Mammary epithelial cell (primary cell): ENCODE measurements at regions of chr7 and their contacts with region 1.

Region 1: DNA sequence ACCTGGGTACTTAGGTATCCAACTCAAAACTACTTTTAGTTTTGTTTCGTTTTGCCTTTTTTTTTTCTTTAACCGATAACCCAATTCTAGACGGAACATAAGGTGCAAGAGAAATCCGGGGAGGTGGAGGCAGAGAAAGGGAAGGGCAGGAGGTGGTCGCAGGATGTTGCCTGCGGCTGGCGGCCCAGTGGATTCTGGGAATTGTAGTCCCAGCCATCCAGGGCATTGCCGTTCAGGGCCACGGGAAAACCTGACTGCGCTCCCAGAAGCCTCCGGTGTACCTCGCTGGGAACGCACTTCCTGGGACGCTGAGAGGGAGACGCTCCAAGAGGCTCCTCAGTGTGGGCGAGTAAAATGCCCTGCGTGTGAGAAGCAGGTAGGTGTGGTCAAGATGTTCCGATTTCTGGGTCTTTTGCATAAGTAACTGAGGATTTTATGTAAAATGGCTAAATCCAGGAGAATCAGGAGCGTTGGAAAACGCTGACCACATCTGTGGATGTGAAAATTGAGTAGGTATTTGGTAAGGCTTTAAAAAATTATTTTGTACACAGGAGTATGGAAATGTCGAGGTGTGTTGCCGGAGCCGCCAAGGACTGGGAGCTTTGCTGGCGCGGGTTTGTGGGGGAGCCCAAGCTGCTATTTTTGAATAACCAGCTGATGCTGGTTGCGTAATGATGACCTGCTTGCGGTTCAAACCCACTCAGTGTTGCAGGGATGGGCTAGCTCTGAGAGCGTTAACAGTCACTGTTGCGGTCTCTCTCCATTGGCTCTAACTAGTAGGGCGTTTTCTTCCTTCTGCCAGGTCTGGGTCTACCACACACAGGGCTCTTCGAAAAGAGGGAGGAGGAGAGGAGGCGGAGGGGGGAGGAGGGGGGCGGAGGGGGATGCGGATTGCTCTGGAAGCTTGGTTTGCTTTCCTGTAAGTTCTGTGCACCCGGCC is at the start of gene CLDN12:
- DNase-seq: peak; percentile 95
- H3K4me3 ChIP-seq: peak within 1 kb of the TSS; percentile 76 to 88 (median 83)
- H3K27ac ChIP-seq: peak within 1 kb of the TSS; percentile 97
- H3K4me1 ChIP-seq: peaks cover 10% of the 10 kb centered on the region
- H3K27me3 ChIP-seq: no peaks in the 10 kb centered on the region
- CTCF ChIP-seq: no peak
- total RNA-seq, gene CLDN12: 45.3 to 68.5 TPM

Region 2: GRCh38 chr7:90173127-90173844 is 230.2 kb before region 1 on chr7:
- CTCF ChIA-PET with region 1: no interaction called
- dilution Hi-C with region 1: no loop called
- in situ Hi-C with region 1: loop called in 1 of 2 experiments (anchors 25 kb)
- intact Hi-C with region 1: no loop called
- DNase-seq: no peak
- H3K4me3 ChIP-seq: no peak overlapping the region
- H3K27ac ChIP-seq: no peak overlapping the region
- H3K4me1 ChIP-seq: peaks cover 10% of the 10 kb centered on the region
- H3K27me3 ChIP-seq: no peaks in the 10 kb centered on the region
- CTCF ChIP-seq: no peak

Region 3: GRCh38 chr7:90346336-90347125 is 56.9 kb before region 1 on chr7 and contains the start of gene GTPBP10:
- CTCF ChIA-PET with region 1: no interaction called
- dilution Hi-C with region 1: no loop called
- in situ Hi-C with region 1: no loop called
- intact Hi-C with region 1: loop called (anchors 1 kb)
- DNase-seq: peak; percentile 90
- H3K4me3 ChIP-seq: peak within 1 kb of the TSS; percentile 76 to 89 (median 84)
- H3K27ac ChIP-seq: peak within 1 kb of the TSS; percentile 84
- H3K4me1 ChIP-seq: peaks cover 12% of the 10 kb centered on the region
- H3K27me3 ChIP-seq: no peaks in the 10 kb centered on the region
- CTCF ChIP-seq: peak; percentile 55 to 83
- total RNA-seq, gene GTPBP10: 12.2 to 35.5 TPM

Region 4: GRCh38 chr7:90383422-90383821 is 20.0 kb before region 1 on chr7:
- CTCF ChIA-PET with region 1: no interaction called
- dilution Hi-C with region 1: no loop called
- in situ Hi-C with region 1: no loop called
- intact Hi-C with region 1: loop called (anchors 1 kb)
- DNase-seq: peak; percentile 54
- H3K4me3 ChIP-seq: peak overlapping the region in 1 of 3 experiments; percentile 3
- H3K27ac ChIP-seq: peak overlapping the region; percentile 68
- H3K4me1 ChIP-seq: peaks cover 36% of the 10 kb centered on the region
- H3K27me3 ChIP-seq: no peaks in the 10 kb centered on the region
- CTCF ChIP-seq: no peak